ENCODE measurements at regions of chr7 and their contacts with region 1.

Region 1: GRCh38 chr7:50475340-50475739 is 25.2 kb upstream of the FIGNL1 start:
- DNase-seq: no peak

Region 2: DNA sequence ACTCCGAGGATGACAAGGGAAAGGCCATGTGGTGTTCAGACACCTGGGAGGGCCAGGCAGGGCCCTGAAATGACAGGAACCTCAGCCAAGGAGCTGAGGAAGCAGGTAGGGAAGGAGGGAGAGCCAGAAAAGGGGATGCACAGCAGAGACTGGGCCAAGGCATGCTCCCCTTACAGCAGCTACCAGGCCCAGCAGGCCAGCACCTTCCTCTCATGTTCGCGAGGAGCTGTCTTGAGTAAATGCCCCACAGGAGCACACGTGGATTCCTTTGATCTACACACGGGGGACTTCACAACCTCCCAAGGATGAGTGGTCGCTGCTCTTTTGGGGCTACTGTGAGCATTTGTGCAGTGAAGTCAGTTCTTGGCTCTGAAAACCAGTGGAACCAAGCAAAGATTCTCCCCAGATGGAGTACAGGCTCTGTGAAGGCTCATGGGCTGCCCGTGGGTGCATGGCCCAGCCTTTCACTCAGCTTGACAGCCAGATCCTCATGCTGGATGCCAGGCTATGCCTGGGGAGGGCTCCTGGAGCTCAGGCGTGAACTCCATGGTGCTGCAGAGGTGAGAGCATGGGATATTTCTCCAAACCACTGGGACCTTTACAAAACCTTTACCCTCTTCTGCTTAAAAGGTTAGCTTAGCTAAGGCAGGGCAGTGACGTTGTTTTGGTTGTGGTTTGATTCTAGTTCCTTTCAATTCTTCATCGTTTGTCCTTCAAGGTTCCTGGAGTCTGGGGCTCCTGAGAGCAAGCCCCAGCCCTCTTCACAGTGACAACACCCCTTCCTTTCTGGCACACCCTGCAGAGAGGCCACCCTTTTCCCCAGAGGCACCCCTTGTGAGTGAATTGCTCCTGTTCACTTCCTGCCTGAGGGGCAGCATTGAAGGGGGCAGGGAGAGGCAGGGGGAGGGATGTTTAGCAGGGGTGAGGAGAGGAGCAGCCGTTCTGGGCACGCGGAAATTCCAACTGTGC is 308.1 kb before region 1 on chr7:
- intact Hi-C with region 1: no loop called
- DNase-seq: no peak

Region 3: DNA sequence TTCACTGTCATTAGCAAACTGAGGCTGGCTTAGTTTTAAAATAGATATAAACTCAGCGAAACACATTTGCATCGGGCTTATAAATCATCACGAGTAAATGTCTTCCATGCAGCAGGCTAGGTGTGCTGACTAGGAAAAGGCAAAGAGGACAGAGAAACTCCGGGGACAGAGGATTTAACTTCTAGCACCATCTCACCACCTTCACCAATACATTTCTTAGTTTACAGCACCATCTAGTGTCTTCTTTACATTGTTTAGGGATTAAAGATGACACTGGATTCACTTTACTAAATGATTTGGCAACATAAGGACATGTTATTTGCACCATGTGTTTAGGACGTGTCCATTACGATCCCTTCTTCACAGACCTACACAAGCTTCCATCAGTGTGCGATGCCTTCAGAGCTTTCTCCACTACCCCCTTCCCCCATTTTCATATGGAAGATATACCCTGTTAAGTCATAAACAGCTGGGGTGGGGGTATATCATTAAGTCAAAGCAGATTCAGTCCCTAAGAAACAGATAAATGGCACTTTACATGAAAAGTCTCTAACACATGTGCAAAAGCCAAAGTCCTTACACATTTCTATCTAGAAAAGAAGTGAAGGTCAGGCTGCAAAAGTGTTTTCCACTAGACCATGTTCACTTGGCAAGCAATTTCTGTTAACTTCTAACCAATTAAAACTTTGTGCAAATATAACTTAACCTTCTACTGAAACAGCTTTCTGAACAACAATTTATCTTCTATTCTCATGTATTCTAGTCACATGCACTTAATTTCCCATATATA is 204.1 kb after region 1 on chr7:
- intact Hi-C with region 1: loop called in 1 of 2 experiments (anchors 10 kb)
- DNase-seq: no peak

Region 4: DNA sequence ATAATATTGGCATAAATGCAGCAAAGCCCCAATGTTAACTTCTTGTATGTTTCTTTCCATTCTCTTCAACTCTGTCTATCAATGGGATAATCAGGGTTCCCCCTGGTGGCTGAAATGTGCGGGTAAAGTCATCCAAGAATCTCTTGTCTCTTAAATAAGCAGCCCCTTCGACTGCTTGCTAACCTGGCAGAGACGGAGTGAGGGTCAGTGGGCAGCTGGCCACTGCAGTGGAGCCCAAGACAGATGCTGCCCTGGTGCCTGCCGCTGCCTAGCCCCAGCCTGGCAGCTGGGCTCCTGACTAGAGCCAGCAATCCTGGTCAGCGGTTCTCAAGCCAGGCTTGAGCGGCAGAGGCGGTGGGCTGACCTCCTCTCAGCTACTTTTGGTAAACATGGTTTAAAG is 592.4 kb after region 1 on chr7:
- intact Hi-C with region 1: loop called in 1 of 2 experiments (anchors 10 kb)
- DNase-seq: no peak

Measured in posterior vena cava (tissue), 2 donors.